ENCODE measurements at regions of chr3 and their contacts with region 1.

Region 1: GRCh38 chr3:113660458-113660857 is 36.0 kb downstream of the USF3 start:
- DNase-seq: no peak
- H3K4me3 ChIP-seq: no peak overlapping the region
- H3K27ac ChIP-seq: peak overlapping the region; percentile 92
- H3K27me3 ChIP-seq: no peaks in the 10 kb centered on the region
- CTCF ChIP-seq: no peak

Region 2: GRCh38 chr3:113634782-113635474 is 25.5 kb before region 1 on chr3:
- CTCF ChIA-PET with region 1: interaction called, 11 read pairs
- POLR2A ChIA-PET with region 1: no interaction called
- DNase-seq: no peak
- H3K4me3 ChIP-seq: no peak overlapping the region
- H3K27ac ChIP-seq: no peak overlapping the region
- H3K27me3 ChIP-seq: peaks cover 2% of the 10 kb centered on the region
- CTCF ChIP-seq: no peak

Region 3: GRCh38 chr3:113649174-113649845 is 11.1 kb before region 1 on chr3:
- CTCF ChIA-PET with region 1: no interaction called
- POLR2A ChIA-PET with region 1: no interaction called
- DNase-seq: no peak
- H3K4me3 ChIP-seq: no peak overlapping the region
- H3K27ac ChIP-seq: no peak overlapping the region
- H3K27me3 ChIP-seq: no peaks in the 10 kb centered on the region
- CTCF ChIP-seq: no peak

Measured in AG04450 (cell line).